ENCODE measurements at regions of chr2 and their contacts with region 1.

Region 1: DNA sequence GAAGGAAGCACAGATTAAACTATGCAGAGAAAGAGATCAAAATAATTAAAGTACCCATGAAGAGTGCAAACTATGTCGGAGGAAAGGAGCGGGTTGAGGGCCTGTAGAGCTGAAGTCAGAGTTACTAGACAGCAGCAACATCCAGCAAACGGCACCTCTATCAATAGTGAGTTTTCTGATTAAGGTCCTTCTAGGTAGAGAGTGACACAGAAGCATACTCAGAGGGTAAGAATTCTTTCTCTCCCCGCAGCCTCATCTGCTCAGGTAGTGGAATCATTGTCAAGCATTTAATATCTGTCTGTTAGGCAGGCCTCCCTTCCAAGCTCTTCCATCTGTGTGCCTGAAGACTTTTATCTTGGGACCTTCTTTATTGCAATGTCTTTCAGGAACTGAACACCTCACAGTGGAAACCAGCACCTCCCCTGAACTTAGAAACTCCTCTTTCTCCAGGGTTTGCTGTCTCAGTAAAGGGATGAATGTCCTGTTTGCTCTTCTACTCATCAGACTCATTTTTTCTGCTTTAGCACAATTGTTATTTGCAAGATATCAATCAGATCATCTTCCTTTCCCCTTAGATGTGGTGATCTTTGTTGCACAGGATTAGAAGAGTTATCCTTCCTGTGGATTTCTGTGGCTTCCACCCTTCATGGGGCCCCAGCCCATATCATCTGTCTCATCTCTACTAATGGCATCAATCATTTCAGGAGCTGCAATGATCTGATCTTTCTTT is 28.8 kb downstream of the SP140 start:
- DNase-seq: peak; percentile 80
- H3K4me3 Mint-ChIP-seq: no peak overlapping the region
- H3K27ac Mint-ChIP-seq: no peak overlapping the region
- H3K4me1 Mint-ChIP-seq: peaks cover 18% of the 10 kb centered on the region
- H3K27me3 Mint-ChIP-seq: no peaks in the 10 kb centered on the region

Region 2: GRCh38 chr2:230225486-230225885 is 28.8 kb before region 1 on chr2 and contains the start of gene SP140:
- intact Hi-C with region 1: loop called (anchors 2 kb)
- DNase-seq: peak; percentile 95
- H3K4me3 Mint-ChIP-seq: peak within 1 kb of the TSS; percentile 85
- H3K27ac Mint-ChIP-seq: peak within 1 kb of the TSS; percentile 98
- H3K4me1 Mint-ChIP-seq: peaks cover 62% of the 10 kb centered on the region
- H3K27me3 Mint-ChIP-seq: no peaks in the 10 kb centered on the region
- total RNA-seq, gene SP140: 236 and 241 TPM in 2 replicates

Region 3: GRCh38 chr2:230268606-230269243 is 14.4 kb after region 1 on chr2:
- intact Hi-C with region 1: loop called (anchors 1 kb)
- DNase-seq: peak; percentile 63
- H3K4me3 Mint-ChIP-seq: peak overlapping the region; percentile 68
- H3K27ac Mint-ChIP-seq: peak overlapping the region; percentile 80
- H3K4me1 Mint-ChIP-seq: peaks cover 63% of the 10 kb centered on the region
- H3K27me3 Mint-ChIP-seq: no peaks in the 10 kb centered on the region

Region 4: DNA sequence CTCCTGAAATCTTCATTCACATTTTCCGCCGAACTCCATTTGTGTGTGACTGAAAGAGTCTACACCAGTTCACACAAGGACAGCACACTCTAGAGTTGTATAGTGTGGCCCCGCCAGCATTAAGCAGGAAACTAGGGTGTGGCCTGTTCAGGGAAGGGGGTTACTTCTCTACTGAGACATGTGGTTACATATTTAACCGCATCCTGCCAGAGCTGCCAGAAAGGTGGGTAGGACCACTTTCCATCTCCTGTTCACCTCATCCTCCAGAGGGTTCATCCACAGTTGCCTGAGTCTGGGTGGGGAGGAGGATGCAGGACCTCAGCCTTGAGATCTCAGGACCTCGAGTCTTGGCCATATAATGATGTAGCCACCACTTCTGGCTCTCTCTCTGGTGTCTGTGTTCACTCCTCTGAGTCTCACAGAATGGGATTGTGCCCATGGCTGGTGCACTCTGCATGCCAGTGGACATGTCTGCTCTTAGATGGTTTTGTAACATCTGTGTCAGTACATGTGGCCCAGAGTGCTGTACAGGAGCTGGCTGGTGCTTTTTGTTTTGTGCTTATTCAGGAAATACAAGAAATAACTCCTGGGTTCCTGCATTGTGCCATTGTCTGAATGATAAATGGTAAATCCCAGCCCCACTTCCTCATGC is 65.0 kb after region 1 on chr2:
- intact Hi-C with region 1: loop called (anchors 2 kb)
- DNase-seq: peak; percentile 94
- H3K4me3 Mint-ChIP-seq: peak overlapping the region; percentile 58
- H3K27ac Mint-ChIP-seq: peak overlapping the region; percentile 93
- H3K4me1 Mint-ChIP-seq: peaks cover 48% of the 10 kb centered on the region
- H3K27me3 Mint-ChIP-seq: no peaks in the 10 kb centered on the region

Region 5: DNA sequence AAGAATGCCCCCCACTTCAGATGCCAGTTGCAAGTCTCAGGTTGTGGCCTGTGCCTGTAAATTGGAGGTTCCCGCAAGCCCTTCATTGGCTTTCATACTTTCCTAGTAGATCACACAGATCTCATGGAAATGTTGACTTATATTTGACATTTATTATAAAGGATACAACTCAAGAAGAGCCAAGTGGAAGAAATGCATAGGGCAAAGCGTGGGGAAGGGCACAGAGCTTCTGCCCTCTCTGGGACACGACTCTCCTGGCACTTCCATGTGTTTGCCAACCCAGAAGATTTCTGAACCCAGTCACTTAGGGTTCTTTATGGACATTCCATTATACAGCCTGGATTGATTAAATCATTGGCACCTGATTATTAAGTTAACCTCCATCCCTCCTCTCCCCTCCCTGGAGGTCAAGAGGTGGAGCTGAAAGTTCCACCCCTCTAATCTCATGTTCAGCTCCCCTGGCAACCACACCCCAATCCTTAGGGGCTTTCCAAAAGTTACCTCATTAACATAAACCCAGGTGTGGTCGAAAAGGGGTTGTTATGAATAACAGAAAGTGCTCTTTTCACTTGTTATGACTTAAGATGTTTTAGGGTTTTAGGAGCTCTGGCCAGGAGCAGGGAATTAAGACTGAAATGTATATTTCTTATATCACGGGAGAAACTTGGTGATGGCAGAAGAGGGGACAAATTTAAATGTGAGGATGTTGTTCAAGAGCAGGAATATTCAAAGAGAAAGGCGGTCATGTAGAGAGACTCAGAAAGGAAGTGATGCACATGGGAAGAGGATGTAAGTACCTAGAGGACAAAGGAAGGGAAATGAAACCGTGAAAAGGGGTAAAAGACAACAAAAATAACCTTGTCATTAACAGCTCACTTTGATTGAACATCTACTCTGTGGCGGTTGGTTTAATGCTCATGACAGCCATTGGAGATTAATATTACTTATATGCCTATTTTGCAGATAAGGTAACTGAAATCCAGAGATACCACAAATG is 193.4 kb after region 1 on chr2:
- intact Hi-C with region 1: loop called (anchors 2 kb)
- DNase-seq: peak; percentile 82
- H3K4me3 Mint-ChIP-seq: peak overlapping the region; percentile 59
- H3K27ac Mint-ChIP-seq: peak overlapping the region; percentile 87
- H3K4me1 Mint-ChIP-seq: peaks cover 55% of the 10 kb centered on the region
- H3K27me3 Mint-ChIP-seq: no peaks in the 10 kb centered on the region

Region 6: DNA sequence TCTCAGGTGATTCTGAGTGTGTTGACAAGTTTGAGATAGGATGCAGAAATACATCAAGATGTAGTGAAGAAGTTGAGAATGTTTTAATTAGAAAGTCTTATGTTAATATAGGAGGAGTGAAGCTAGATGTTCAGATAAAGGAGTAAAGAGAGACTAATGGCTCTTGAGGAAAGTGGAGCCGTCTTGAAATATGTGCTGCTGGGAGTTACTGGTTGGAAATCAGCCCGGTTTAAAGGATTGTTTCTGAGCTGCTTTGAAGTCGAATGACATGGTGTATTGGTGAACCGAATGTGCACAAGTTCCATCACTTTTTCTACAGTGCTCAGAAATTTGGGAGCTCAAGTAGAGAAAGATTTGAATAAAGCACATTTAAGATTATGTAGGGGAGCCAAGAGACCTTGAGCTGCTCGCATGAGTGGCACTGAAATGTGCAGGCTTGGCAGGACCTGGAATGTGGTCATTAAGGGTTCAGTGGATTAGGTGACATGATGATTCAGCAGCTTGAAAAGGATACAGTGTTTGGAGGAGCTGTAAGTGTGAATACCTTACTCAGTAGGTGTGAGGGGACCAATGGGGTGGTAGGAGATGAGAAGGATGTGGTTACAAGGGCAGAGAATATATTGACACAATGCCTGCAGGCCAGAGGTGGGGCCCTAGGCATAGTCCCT is 526.9 kb after region 1 on chr2:
- intact Hi-C with region 1: no loop called
- DNase-seq: peak; percentile 84
- H3K4me3 Mint-ChIP-seq: peak overlapping the region; percentile 24
- H3K27ac Mint-ChIP-seq: peak overlapping the region; percentile 77
- H3K4me1 Mint-ChIP-seq: peaks cover 68% of the 10 kb centered on the region
- H3K27me3 Mint-ChIP-seq: no peaks in the 10 kb centered on the region

Measured in activated CD4-positive, alpha-beta T cell treated with anti-CD3 and anti-CD28 coated beads, Interleukin-2, amount 10 ng/mL, durations not matched to agents 24 days and 14 days (primary cell).